Activated CD4-positive, alpha-beta T cell treated with anti-CD3 and anti-CD28 coated beads, Interleukin-2, amount 10 ng/mL, durations not matched to agents 24 days and 14 days (primary cell): ENCODE measurements at regions of chr22 and their contacts with region 1.

Region 1: DNA sequence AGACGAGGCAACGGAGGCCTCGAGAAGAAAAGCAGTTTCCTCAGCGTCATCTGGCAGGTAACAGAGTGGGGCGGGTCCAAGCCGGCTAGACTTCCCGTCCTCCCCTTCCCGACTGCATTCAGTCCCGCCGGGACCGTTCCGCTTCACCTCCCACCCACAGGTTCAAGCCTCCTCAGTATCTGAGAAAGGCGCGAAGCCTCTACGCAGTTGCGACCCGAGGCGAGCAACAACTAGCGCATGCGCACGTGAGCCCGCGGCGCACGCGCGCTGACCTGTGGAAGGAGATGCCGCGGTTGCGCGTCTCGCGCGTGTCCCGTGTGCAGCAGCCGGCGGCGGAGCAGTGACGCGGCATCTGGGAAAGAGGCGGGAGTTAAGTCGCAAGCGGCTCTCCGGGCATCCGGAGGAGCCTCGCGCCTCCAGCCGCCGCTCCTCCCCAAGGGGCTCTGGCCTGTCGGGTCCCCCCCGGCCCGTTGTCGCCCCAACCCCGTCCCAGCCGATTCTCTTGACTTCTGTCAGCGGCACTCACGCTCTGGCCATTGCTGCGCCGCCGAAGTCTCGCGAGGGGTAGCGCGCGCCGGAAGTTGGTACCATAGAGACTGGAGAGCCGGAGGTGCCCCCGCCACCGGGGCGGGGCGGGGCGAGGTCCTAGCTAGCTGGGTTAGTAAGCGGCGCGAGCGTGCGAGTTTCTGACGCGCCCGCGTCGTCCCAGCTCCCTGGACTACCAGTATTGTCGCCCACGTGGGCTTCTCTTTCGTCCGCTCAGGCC is at the start of gene THAP7:
- DNase-seq: peak; percentile 99
- H3K4me3 Mint-ChIP-seq: peak within 1 kb of the TSS; percentile 97
- H3K27ac Mint-ChIP-seq: peak within 1 kb of the TSS; percentile 99
- H3K4me1 Mint-ChIP-seq: peaks cover 14% of the 10 kb centered on the region
- H3K27me3 Mint-ChIP-seq: no peaks in the 10 kb centered on the region
- total RNA-seq, gene THAP7: 30.3 and 31.5 TPM in 2 replicates

Region 2: DNA sequence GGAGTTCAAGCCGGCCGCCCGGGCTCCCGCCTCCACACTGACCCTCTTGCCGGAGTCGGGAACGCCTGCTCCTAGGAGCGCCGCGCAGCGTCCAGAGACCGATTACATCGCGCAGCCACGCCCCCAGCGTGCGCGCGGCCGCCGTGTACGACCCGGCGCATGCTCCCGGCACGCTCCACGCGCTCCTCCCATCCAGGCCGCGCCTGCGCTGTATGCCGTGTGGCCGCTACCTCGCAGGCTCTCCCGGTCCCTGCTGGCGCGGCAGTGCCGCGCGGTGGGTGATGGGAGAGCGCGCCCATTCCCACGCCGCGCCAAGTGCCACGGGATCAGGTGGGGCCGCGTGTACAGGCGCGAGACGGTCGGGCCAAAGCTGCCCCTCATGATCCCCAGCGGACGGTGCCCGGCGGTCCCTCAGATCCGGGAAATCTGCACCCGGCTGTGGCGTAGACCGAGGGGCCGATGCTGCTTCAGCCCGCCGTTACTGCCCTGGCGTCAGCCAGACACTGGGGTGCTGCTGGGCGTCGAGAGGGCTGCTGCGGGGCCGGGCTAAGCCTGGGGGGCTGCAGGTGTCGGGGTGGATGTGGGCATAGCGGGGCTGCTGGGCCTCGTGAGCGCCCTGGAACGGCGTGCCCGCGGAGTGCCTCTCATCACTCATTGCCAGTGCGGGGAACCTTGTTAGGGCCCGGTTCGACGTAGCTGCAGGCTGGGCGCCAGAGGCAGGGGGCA is 1146.8 kb before region 1 on chr22 and contains the starts of genes GNB1L and RTL10:
- intact Hi-C with region 1: loop called (anchors 10 kb)
- DNase-seq: peak; percentile 99
- H3K4me3 Mint-ChIP-seq: peak within 1 kb of the TSS; percentile 92
- H3K27ac Mint-ChIP-seq: peak within 1 kb of the TSS; percentile 96
- H3K4me1 Mint-ChIP-seq: peaks cover 24% of the 10 kb centered on the region
- H3K27me3 Mint-ChIP-seq: no peaks in the 10 kb centered on the region
- total RNA-seq, gene GNB1L: 21.1 and 21.4 TPM in 2 replicates
- total RNA-seq, gene RTL10: 20.0 and 23.4 TPM in 2 replicates

Region 3: DNA sequence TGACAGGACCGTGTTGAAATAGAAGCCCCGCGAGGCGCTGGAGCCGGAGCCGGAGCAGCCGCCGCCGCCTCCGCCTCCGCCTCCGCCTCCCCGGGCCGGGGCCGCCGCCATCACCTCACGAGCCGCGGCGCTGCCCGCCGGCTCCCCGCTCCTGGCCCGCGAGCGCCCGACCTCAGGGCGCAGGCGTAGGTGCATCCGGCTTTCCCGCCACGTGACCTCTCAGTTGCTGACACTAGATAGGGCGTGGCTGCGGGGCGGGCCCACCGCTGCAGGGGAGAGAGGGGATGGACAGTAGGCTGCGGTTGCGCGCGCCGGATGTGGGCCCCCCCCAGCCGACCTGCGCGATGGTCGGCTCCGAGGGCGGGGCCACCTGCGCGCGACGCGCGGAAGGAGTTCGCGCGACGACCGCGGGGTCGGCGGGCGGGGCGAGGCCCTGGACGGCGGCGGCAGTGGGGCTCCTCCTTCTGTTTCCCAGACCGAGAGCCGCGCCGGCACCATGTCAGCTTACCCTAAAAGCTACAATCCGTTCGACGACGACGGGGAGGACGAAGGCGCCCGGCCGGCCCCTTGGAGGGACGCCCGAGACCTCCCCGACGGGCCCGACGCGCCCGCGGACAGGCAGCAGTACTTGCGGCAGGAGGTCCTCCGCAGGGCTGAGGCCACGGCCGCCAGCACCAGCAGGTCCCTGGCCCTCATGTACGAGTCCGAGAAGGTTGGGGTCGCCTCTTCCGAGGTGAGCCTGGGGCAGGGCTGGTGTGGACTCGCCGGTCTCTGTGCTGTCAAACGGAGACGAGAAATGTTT is 142.9 kb before region 1 on chr22 and contains the starts of genes PI4KA and SNAP29:
- intact Hi-C with region 1: loop called (anchors 1 kb)
- DNase-seq: peak; percentile 99
- H3K4me3 Mint-ChIP-seq: peak within 1 kb of the TSS; percentile 87
- H3K27ac Mint-ChIP-seq: peak within 1 kb of the TSS; percentile 84
- H3K4me1 Mint-ChIP-seq: peaks cover 36% of the 10 kb centered on the region
- H3K27me3 Mint-ChIP-seq: no peaks in the 10 kb centered on the region
- total RNA-seq, gene PI4KA: 78.4 and 83.8 TPM in 2 replicates
- total RNA-seq, gene SNAP29: 24.3 and 25.8 TPM in 2 replicates

Region 4: GRCh38 chr22:20916983-20917810 is 84.5 kb before region 1 on chr22 and contains the start of gene CRKL:
- intact Hi-C with region 1: loop called (anchors 2 kb)
- DNase-seq: peak; percentile 99
- H3K4me3 Mint-ChIP-seq: peak within 1 kb of the TSS; percentile 94
- H3K27ac Mint-ChIP-seq: peak within 1 kb of the TSS; percentile 90
- H3K4me1 Mint-ChIP-seq: peaks cover 27% of the 10 kb centered on the region
- H3K27me3 Mint-ChIP-seq: no peaks in the 10 kb centered on the region
- total RNA-seq, gene CRKL: 81.4 and 82.4 TPM in 2 replicates

Region 5: DNA sequence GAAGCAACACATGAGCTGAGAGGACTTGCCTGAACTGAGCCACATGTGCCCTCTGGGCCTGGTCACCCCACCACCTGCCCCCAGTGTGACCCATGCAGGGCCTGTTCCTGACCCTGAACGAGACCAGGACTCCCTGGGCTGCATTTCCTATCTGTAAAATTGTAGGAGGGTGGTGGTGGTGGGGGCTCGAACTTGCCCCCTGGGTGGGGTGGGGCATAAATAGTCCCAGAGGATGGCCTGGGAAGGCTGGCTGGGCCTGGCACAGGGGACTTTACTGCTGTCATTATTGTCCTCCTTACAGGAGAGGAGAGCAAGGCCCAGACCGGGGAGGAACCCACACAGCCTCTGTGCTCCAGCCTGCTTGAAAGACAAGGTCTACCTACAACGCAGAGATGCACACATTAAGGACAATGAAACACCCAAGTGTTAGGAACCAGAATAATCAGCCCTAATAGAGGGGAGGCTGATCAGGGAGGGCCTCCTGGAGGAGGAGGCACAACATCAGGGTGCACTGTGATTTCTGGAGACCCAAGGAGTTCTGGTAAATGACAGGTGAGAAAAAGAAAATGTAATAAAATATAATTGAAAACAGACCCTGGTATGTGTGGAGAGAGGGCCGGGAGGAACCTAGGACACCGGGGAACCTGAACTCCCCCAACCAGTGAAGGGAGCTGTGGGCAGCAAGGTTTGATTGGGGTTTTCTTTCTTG is 37.5 kb before region 1 on chr22:
- intact Hi-C with region 1: loop called (anchors 5 kb)
- DNase-seq: no peak
- H3K4me3 Mint-ChIP-seq: peak overlapping the region; percentile 46
- H3K27ac Mint-ChIP-seq: no peak overlapping the region
- H3K4me1 Mint-ChIP-seq: peaks cover 10% of the 10 kb centered on the region
- H3K27me3 Mint-ChIP-seq: peaks cover 29% of the 10 kb centered on the region

Region 6: DNA sequence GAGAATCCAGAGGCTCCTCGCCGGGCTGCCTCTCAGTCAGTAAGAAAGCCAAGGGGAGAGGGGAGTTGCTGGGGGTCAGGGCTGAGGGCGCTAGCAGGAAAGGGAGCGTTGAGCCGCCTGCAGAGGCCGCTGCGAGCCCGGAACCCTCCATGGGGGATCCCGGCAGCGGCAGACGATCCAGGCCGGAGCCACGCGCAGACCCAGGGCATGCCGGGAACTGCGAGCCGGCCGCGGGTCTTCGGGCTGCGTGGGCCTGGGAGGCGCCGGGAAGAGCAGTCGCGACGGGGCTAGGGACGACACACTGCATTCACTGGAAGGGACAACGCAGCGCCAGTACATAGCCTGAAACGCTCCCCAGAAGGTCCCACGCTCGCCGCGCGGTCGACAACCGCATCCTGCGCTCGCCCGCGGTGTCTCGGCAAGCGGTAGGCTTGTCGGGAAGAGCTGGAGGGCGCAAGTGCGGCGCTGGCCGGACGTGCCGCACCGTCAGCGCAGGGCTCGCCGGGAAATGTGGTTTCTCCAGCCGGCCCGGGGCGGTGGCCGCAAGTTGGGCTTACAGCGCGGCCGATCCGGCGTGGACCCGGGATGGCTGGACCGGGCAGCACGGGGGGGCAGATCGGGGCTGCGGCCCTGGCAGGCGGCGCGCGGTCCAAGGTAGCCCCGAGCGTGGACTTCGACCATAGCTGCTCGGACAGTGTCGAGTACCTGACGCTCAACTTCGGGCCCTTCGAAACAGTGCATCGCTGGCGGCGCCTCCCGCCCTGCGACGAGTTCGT is 19.8 kb before region 1 on chr22 and contains the start of gene LZTR1:
- intact Hi-C with region 1: loop called (anchors 1 kb)
- DNase-seq: peak; percentile 92
- H3K4me3 Mint-ChIP-seq: peak within 1 kb of the TSS; percentile 97
- H3K27ac Mint-ChIP-seq: peak within 1 kb of the TSS; percentile 93
- H3K4me1 Mint-ChIP-seq: peaks cover 32% of the 10 kb centered on the region
- H3K27me3 Mint-ChIP-seq: no peaks in the 10 kb centered on the region
- total RNA-seq, gene LZTR1: 69.9 and 76.4 TPM in 2 replicates

Region 7: DNA sequence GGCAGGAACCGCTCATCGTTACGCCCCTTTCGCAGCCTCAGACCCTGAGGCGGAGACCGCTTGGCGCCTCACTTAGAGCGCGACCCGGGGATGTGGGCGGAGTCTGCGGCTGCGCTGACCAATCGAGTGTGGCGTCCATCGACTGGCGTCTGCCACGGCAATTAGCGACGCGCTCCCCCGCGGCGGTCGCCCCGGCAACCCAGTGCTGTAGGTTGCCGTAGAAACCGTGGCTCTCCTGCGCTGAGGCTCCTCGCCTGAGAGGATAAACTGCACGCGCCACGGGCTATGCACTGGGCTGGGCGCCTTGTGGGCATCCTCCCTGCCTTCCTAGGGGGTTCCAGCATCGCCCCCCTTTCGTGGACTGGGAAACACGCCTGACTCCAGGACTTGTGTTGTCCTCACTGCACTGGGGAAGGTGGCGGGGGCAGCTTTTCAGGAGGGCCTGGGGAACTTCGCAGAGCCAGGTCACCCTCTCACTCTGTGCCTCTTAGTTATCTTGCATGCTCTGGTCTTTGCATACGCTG is 12.5 kb after region 1 on chr22:
- intact Hi-C with region 1: loop called (anchors 1 kb)
- DNase-seq: peak; percentile 95
- H3K4me3 Mint-ChIP-seq: peak overlapping the region; percentile 78
- H3K27ac Mint-ChIP-seq: peak overlapping the region; percentile 23
- H3K4me1 Mint-ChIP-seq: peaks cover 13% of the 10 kb centered on the region
- H3K27me3 Mint-ChIP-seq: peaks cover 9% of the 10 kb centered on the region

Region 8: DNA sequence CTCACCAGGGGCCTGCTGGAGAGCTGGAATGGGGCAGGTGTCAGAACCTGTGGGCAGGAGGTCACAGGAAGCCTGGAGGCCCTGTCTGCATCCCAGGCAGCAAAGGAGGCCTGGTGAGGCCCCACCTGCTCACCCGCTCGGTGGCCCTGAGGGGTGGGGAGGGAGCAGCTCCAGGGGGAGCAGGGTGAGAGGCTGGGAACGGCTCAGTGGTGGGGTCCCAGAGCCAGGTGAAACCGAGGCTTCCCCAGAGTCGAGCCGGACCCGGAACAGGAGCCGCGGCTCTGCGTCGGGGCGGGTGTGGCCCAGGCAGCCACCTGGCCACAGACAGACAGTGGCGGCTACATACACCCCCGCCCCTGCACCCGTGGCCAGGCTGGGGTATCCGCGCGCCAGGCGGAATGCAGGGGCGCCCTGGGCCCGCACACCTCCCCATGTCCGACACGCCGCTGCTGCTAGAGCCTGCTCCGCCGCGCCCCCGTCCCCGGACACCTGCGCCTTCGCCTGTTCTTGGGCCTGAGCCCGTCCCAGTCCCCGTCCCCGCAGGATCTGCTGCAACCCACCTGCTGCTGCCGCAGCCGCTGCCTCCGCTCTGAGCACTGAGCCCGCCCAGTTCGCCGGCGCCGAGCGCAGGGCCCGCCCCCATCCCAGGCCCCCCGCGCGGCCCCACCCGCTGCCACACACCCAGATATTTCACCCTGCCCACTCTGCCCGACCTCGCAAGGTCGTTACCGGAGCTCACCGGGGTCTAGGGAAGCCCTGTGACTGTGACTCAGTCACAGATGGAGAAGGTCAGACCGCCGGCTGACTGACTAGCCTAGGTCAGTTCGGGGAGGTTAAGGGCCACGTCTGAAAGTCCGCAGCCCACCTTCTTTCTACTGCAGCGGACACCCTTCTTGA is 30.5 kb after region 1 on chr22 and contains the start of gene SLC7A4:
- intact Hi-C with region 1: no loop called
- DNase-seq: no peak
- H3K4me3 Mint-ChIP-seq: no peak within 1 kb of the TSS
- H3K27ac Mint-ChIP-seq: no peak within 1 kb of the TSS
- H3K4me1 Mint-ChIP-seq: peaks cover 3% of the 10 kb centered on the region
- H3K27me3 Mint-ChIP-seq: peaks cover 41% of the 10 kb centered on the region
- total RNA-seq, gene SLC7A4: not detected in 2 replicates

Region 9: GRCh38 chr22:21055587-21056319 is 54.0 kb after region 1 on chr22:
- intact Hi-C with region 1: no loop called
- DNase-seq: peak; percentile 58
- H3K4me3 Mint-ChIP-seq: peak overlapping the region; percentile 52
- H3K27ac Mint-ChIP-seq: no peak overlapping the region
- H3K4me1 Mint-ChIP-seq: peaks cover 22% of the 10 kb centered on the region
- H3K27me3 Mint-ChIP-seq: peaks cover 5% of the 10 kb centered on the region